Activated CD4-positive, alpha-beta memory T cell treated with anti-CD3 and anti-CD28 coated beads for 36 hours (primary cell): ENCODE measurements at regions of chr20 and their contacts with region 1.

Region 1: GRCh38 chr20:34312544-34313217 is 9.5 kb upstream of the AHCY start:
- DNase-seq: peak; percentile 94
- H3K4me3 Mint-ChIP-seq: no peak overlapping the region
- H3K27ac Mint-ChIP-seq: no peak overlapping the region
- H3K4me1 Mint-ChIP-seq: peaks cover 6% of the 10 kb centered on the region
- H3K27me3 Mint-ChIP-seq: peaks cover 19% of the 10 kb centered on the region

Region 2: DNA sequence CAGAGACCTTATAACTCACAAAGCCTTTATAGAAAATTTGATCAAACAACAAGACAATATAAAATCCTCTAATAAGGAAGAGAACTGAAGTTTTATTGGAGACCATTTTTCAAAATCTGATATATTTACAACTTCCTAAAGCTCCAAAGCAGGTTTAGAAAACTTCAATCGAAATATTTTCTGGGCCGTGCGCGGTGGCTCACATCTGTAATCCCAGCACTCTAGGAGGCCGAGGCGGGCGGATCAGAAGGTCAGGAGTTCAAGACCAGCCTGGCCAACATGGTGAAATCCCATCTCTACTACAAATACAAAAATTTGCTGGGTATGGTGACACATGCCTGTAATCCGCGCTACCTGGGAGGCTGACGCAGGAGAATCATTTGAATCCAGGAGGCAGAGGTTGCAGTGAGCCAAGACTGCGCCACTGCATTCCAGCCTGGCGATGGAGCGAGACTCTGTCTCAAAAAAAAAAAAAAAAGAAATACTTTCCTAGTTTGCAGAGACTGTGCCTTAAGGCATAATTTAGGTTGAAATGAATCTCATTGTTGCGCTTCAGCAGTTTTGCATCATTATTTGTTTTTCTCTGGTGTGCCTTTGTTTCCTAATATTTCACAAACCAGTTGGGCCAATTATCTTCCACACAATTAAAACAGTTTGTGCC is 132.1 kb before region 1 on chr20:
- CTCF ChIA-PET with region 1: no interaction called
- POLR2A ChIA-PET with region 1: no interaction called
- intact Hi-C with region 1: no loop called
- DNase-seq: no peak
- H3K4me3 Mint-ChIP-seq: no peak overlapping the region
- H3K27ac Mint-ChIP-seq: no peak overlapping the region
- H3K4me1 Mint-ChIP-seq: no peaks in the 10 kb centered on the region
- H3K27me3 Mint-ChIP-seq: peaks cover 12% of the 10 kb centered on the region

Region 3: GRCh38 chr20:34363062-34363464 is 50.4 kb after region 1 on chr20 and contains the start of gene ITCH:
- CTCF ChIA-PET with region 1: interaction called, 31 read pairs
- POLR2A ChIA-PET with region 1: interaction called, 4 read pairs
- intact Hi-C with region 1: no loop called
- DNase-seq: peak; percentile 96
- H3K4me3 Mint-ChIP-seq: peak within 1 kb of the TSS; percentile 93
- H3K27ac Mint-ChIP-seq: peak within 1 kb of the TSS; percentile 92
- H3K4me1 Mint-ChIP-seq: peaks cover 28% of the 10 kb centered on the region
- H3K27me3 Mint-ChIP-seq: no peaks in the 10 kb centered on the region
- total RNA-seq, gene ITCH: 42.3 to 45.2 TPM

Region 4: GRCh38 chr20:34437330-34437986 is 124.8 kb after region 1 on chr20:
- CTCF ChIA-PET with region 1: interaction called, 23 read pairs
- POLR2A ChIA-PET with region 1: no interaction called
- intact Hi-C with region 1: no loop called
- DNase-seq: no peak
- H3K4me3 Mint-ChIP-seq: no peak overlapping the region
- H3K27ac Mint-ChIP-seq: peak overlapping the region; percentile 13
- H3K4me1 Mint-ChIP-seq: peaks cover 8% of the 10 kb centered on the region
- H3K27me3 Mint-ChIP-seq: no peaks in the 10 kb centered on the region

Region 5: DNA sequence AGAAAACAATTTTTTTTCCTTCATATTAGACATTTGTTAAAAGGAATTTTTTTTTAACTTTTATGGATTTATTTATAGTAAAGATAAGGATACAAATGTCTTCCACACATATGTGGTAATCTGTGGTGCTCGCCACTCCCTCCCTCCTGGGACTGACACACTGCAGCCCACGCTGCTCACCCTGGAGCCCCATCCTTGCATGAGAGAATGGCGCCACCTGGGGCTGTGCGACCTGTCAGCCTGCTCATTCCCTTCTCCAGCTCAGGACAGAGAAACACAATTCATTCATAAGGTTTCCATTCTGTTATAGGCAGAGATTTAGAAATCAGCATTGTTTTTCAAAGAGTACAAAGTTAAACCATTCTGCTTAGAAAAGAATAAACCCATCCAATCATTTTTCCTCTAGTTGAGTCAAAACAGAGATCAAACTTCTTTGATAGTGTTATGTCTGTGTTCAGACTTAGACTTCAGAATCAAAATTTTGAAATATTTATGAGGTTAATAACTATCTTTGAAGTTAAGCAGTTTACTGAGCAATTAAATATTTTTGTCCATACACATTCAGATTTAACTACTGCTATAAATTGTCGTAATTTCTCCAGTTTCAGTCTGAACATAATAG is 160.7 kb after region 1 on chr20:
- CTCF ChIA-PET with region 1: interaction called, 29 read pairs
- POLR2A ChIA-PET with region 1: no interaction called
- intact Hi-C with region 1: loop called (anchors 1 kb)
- DNase-seq: peak; percentile 64
- H3K4me3 Mint-ChIP-seq: no peak overlapping the region
- H3K27ac Mint-ChIP-seq: no peak overlapping the region
- H3K4me1 Mint-ChIP-seq: peaks cover 8% of the 10 kb centered on the region
- H3K27me3 Mint-ChIP-seq: no peaks in the 10 kb centered on the region

Region 6: GRCh38 chr20:34516247-34517113 is 203.8 kb after region 1 on chr20 and contains the start of gene DYNLRB1:
- CTCF ChIA-PET with region 1: interaction called, 98 read pairs
- POLR2A ChIA-PET with region 1: interaction called, 7 read pairs
- intact Hi-C with region 1: loop called (anchors 2 kb)
- DNase-seq: peak; percentile 96
- H3K4me3 Mint-ChIP-seq: peak within 1 kb of the TSS; percentile 98
- H3K27ac Mint-ChIP-seq: peak within 1 kb of the TSS; percentile 92
- H3K4me1 Mint-ChIP-seq: peaks cover 34% of the 10 kb centered on the region
- H3K27me3 Mint-ChIP-seq: no peaks in the 10 kb centered on the region
- total RNA-seq, gene DYNLRB1: 101 to 108 TPM

Region 7: DNA sequence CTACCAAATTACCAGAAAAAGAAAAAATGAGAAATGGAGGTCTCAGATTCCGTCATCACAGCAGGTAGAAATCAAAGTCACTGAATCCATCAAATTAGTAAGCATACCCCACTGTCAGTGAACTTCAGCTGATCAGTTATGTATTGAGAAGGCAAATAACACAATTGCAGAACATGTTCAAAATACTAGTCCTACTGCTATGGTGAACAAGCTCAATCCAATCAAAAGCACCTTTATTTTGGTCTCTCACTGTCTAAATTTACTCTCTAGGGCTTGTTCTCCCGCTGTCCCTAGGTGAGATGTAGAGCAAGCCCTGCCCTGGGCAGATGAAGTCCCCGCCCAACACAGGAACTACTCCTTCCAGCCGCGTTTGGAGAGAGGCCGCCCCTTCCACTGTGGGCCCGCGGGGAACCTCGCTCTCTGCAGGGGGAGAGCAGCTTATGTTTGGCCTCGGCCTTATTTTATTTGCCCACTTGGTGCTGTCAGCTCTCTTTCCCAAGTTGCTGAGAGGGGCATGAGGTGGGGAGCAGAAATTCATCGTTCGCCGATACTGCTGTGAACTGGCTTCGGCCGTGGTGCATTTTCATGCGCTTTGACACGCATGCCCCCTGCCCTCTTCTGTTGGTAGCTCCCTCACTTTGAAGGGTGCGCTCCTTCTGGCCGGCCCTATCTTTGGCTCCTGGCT is 231.6 kb after region 1 on chr20:
- CTCF ChIA-PET with region 1: interaction called, 15 read pairs
- POLR2A ChIA-PET with region 1: no interaction called
- intact Hi-C with region 1: no loop called
- DNase-seq: peak; percentile 39
- H3K4me3 Mint-ChIP-seq: no peak overlapping the region
- H3K27ac Mint-ChIP-seq: no peak overlapping the region
- H3K4me1 Mint-ChIP-seq: peaks cover 39% of the 10 kb centered on the region
- H3K27me3 Mint-ChIP-seq: no peaks in the 10 kb centered on the region